ENCODE measurements at regions of chr16 and their contacts with region 1.

Region 1: DNA sequence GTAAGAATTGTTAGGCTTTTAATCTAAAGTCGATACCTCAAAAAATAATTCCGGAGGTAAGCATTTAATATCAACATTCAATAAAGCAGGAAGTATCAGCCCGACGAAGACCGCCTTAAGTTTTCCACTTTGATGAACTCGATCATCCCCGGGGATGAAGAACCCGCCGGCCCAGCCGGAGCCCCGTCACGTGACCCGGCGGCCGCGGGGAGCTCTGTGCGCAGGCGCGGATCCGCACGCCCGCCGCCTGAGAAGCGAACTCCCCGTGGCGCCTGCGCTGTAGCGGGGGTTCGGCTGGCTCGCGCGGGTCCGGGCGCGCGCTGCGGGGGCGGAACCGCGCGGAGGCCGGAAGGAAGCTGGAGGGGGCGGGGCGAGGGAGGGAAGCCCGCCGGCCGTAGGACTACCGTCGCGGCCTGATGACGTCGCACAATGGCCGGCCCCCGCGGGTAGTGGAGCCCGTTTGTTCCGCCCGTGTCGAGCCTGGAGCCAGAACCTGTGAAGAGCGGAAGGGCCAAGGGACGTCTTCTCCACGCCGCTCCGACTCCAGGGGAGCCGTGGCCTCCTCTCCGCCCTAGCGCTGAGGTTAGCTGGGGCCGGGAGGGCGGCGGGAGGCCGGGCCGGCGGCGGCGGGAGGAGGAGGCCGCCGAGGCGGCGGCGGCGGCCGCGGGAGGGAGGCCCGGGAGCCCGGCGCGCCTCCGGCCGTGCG is at the start of gene ZC3H18:
- DNase-seq: peak; percentile 96
- H3K4me3 ChIP-seq: peak within 1 kb of the TSS; percentile 93 to 99 (median 99)
- H3K27ac ChIP-seq: peak within 1 kb of the TSS; percentile 41
- H3K4me1 ChIP-seq: peaks cover 23% of the 10 kb centered on the region
- H3K27me3 ChIP-seq: no peaks in the 10 kb centered on the region
- CTCF ChIP-seq: no peak
- total RNA-seq, gene ZC3H18: 9.0 to 48.2 TPM

Region 2: GRCh38 chr16:87877938-87878507 is 692.1 kb before region 1 on chr16:
- CTCF ChIA-PET with region 1: no interaction called
- dilution Hi-C with region 1: no loop called
- in situ Hi-C with region 1: no loop called
- intact Hi-C with region 1: loop called (anchors 10 kb)
- DNase-seq: no peak
- H3K4me3 ChIP-seq: no peak overlapping the region
- H3K27ac ChIP-seq: no peak overlapping the region
- H3K4me1 ChIP-seq: no peaks in the 10 kb centered on the region
- H3K27me3 ChIP-seq: peaks cover 15% of the 10 kb centered on the region
- CTCF ChIP-seq: peak in 1 of 2 donors; percentile 6

Region 3: GRCh38 chr16:88282225-88283018 is 287.7 kb before region 1 on chr16:
- CTCF ChIA-PET with region 1: no interaction called
- dilution Hi-C with region 1: no loop called
- in situ Hi-C with region 1: no loop called
- intact Hi-C with region 1: no loop called
- DNase-seq: peak; percentile 79
- H3K4me3 ChIP-seq: no peak overlapping the region
- H3K27ac ChIP-seq: no peak overlapping the region
- H3K4me1 ChIP-seq: peaks cover 11% of the 10 kb centered on the region
- H3K27me3 ChIP-seq: no peaks in the 10 kb centered on the region
- CTCF ChIP-seq: no peak

Region 4: GRCh38 chr16:88706288-88706964 is 136.3 kb after region 1 on chr16 and contains the starts of genes CTU2 and RNF166:
- CTCF ChIA-PET with region 1: no interaction called
- dilution Hi-C with region 1: no loop called
- in situ Hi-C with region 1: no loop called
- intact Hi-C with region 1: loop called (anchors 5 kb)
- DNase-seq: peak; percentile 82
- H3K4me3 ChIP-seq: peak within 1 kb of the TSS; percentile 82 to 96 (median 82)
- H3K27ac ChIP-seq: peak within 1 kb of the TSS; percentile 26
- H3K4me1 ChIP-seq: peaks cover 8% of the 10 kb centered on the region
- H3K27me3 ChIP-seq: no peaks in the 10 kb centered on the region
- CTCF ChIP-seq: no peak
- total RNA-seq, gene CTU2: 13.2 to 26.5 TPM
- total RNA-seq, gene RNF166: 9.8 to 11.2 TPM